ENCODE measurements at regions of chr19 and their contacts with region 1.

Region 1: GRCh38 chr19:40603389-40604135 is 2.4 kb downstream of the LTBP4 start:
- H3K4me3 ChIP-seq: peak overlapping the region; percentile 35
- H3K27ac ChIP-seq: peak overlapping the region; percentile 53
- H3K4me1 ChIP-seq: peaks cover 52% of the 10 kb centered on the region
- CTCF ChIP-seq: peak; percentile 58; the same call in 1 of the 2 replicates

Region 2: DNA sequence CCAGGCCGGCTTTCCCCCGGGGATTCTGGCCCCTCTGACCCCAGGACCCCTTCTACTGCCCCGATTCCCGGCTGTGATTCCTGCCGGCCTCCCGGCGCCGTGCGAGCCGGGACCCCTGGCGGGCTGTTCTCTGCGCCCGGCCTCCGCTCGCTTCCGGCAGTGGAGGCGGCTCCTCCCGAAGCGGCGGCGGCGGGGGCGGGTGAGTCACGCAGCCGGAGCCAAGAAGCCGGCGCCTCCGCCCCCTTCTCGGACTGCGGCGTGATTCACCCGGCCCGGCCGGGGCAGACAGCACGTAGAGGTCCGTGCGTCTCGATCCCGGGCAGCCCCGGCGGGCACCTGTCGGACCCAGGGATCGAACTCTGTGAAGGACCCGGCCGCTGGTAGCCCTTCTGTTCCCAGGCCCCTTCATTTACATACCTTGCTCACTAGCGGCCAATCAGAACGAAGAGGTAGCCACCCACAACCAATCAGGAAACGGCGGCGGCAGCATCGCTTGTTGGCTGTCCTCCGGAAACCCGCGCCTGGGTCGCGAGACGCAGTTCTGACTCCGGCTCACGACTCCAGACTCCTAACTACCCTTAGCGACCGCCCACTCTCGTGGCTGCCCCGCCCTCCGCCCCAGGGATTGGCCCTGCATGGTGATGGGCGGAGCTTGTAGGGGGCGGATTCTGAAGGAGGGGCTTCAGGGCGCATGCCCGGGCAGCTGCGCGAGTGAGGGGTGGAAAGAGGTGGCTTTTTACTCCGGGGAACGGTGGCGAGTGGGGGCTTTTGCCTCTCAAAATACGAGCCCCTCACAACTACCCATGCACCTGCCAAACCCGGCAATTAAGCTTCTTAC is 177.9 kb before region 1 on chr19 and contains the start of gene SERTAD1:
- CTCF ChIA-PET with region 1: interaction called, 10 read pairs
- POLR2A ChIA-PET with region 1: interaction called, 9 read pairs
- H3K4me3 ChIP-seq: peak within 1 kb of the TSS; percentile 67
- H3K27ac ChIP-seq: peak within 1 kb of the TSS; percentile 97
- H3K4me1 ChIP-seq: peaks cover 19% of the 10 kb centered on the region
- CTCF ChIP-seq: peak; percentile 98

Region 3: DNA sequence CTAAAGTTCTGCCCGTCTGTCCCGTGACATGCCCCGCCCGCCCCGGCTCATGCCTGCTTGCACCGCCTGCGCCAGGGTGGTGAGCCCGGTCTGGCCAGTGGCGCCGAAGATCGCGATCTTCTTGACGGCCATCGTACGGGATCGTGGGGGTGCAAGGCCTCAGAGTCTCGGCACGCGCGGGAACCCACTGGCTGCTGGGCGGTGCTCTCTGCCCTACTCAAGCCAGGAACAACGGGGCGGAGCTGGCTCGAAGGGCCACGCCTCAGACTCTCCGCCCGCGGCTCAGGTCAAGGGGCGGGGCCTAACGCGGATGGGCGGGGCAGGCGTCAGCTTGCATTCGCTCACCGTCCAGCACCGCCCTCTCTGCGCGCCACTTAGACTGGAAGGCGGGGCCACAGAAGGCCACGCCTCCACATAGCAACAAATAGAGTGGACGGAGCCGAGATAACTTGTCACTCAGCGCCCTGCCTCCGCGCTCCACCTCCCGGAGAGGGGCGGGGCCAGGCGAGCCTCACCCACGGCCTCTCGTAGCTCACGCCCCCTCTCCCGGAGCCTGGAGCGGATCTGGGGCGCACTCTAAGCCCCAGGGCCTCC is 137.9 kb before region 1 on chr19 and contains the start of gene BLVRB:
- CTCF ChIA-PET with region 1: interaction called, 58 read pairs
- POLR2A ChIA-PET with region 1: interaction called, 15 read pairs
- H3K4me3 ChIP-seq: peak within 1 kb of the TSS; percentile 53
- H3K27ac ChIP-seq: peak within 1 kb of the TSS; percentile 20; the same call in 1 of the 2 replicates
- H3K4me1 ChIP-seq: peaks cover 13% of the 10 kb centered on the region
- CTCF ChIP-seq: no peak

Region 4: GRCh38 chr19:40529093-40529954 is 74.2 kb before region 1 on chr19:
- CTCF ChIA-PET with region 1: interaction called, 21 read pairs
- POLR2A ChIA-PET with region 1: interaction called, 3 read pairs
- H3K4me3 ChIP-seq: peak overlapping the region; percentile 19
- H3K27ac ChIP-seq: peak overlapping the region; percentile 39
- H3K4me1 ChIP-seq: peaks cover 17% of the 10 kb centered on the region
- CTCF ChIP-seq: peak; percentile 100

Region 5: GRCh38 chr19:40570313-40571004 is 33.1 kb before region 1 on chr19:
- CTCF ChIA-PET with region 1: interaction called, 110 read pairs
- POLR2A ChIA-PET with region 1: interaction called, 35 read pairs
- H3K4me3 ChIP-seq: peak overlapping the region; percentile 35
- H3K27ac ChIP-seq: peak overlapping the region; percentile 73
- H3K4me1 ChIP-seq: peaks cover 16% of the 10 kb centered on the region
- CTCF ChIP-seq: peak; percentile 99

Region 6: GRCh38 chr19:40623403-40624251 is 20.1 kb after region 1 on chr19:
- CTCF ChIA-PET with region 1: interaction called, 158 read pairs
- POLR2A ChIA-PET with region 1: interaction called, 61 read pairs
- H3K4me3 ChIP-seq: peak overlapping the region; percentile 0
- H3K27ac ChIP-seq: peak overlapping the region; percentile 59; the same call in 1 of the 2 replicates
- H3K4me1 ChIP-seq: peaks cover 16% of the 10 kb centered on the region
- CTCF ChIP-seq: no peak

Region 7: DNA sequence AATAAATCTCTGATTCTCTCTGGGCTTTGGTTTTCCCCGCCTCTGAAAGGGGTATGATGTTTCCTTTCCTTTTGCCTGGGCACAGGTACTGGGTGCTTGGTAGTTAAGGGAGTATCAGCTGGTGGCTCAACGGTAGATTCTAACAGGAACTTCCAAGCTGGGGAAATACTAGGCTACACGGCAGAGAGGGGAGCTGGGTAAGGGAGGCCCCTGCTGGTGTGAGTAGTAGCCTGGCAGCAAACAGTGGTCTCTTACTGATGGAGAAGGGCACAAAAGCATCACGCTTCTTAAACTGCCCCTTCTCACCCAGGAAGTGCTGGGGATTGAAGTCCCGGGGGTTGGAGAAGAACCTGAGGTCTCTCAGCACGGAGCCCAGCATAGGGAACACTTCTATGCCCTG is 305.4 kb after region 1 on chr19:
- CTCF ChIA-PET with region 1: no interaction called
- POLR2A ChIA-PET with region 1: no interaction called
- H3K4me3 ChIP-seq: no peak overlapping the region
- H3K27ac ChIP-seq: no peak overlapping the region
- H3K4me1 ChIP-seq: no peaks in the 10 kb centered on the region
- CTCF ChIP-seq: peak; percentile 50

Measured in HEK293 (cell line).